ENCODE measurements at regions of chr13 and their contacts with region 1.

Region 1: DNA sequence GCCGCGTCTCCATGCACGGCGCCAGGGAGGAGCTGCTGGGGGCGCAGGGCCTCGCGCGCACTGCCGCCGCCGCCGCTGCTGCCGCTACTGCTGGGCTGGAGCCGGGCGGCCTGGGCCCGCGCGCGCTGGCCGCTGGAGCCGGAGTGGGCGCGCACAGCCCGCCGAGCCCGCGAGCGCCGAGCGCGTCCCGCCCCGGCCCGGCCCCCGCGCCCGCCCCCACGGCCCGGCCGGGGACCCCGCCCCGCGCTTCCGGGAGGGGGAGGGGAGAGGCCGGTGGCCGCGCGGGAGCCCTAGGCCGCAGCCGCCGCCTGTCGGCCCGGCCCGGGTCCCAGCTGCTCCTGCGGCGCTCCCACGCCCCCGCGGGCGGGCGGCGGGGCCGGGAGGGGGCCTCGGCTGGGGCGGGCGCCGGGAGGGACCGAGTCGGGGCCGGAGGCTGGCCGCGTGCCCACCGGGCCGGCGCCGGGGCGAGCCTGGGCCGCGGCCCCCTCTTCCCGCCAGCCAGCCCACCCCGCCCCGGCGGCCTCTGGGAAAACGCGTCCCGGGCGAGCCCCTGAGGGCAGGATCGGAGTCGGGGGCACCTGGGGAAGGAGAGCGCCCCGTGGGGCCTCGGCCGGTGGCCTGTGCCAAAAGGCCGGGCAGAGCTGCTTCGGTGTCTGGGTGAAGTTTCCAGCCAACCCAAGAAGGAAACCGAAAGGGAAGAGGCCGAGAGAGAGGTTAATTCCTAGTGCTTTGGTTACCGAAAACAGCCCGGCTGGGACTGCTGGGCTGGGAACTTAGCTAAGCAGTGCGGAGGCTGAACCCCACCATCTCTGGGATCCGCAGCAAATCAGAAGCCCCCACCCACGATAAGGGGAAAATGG is at the start of gene STK24:
- DNase-seq: peak; percentile 75
- ATAC-seq: peak; percentile 42
- H3K4me3 Mint-ChIP-seq: peak within 1 kb of the TSS; percentile 95
- H3K27ac Mint-ChIP-seq: peak within 1 kb of the TSS; percentile 76
- H3K4me1 Mint-ChIP-seq: peaks cover 39% of the 10 kb centered on the region
- H3K27me3 Mint-ChIP-seq: no peaks in the 10 kb centered on the region
- total RNA-seq, gene STK24: 146 to 173 TPM

Region 2: DNA sequence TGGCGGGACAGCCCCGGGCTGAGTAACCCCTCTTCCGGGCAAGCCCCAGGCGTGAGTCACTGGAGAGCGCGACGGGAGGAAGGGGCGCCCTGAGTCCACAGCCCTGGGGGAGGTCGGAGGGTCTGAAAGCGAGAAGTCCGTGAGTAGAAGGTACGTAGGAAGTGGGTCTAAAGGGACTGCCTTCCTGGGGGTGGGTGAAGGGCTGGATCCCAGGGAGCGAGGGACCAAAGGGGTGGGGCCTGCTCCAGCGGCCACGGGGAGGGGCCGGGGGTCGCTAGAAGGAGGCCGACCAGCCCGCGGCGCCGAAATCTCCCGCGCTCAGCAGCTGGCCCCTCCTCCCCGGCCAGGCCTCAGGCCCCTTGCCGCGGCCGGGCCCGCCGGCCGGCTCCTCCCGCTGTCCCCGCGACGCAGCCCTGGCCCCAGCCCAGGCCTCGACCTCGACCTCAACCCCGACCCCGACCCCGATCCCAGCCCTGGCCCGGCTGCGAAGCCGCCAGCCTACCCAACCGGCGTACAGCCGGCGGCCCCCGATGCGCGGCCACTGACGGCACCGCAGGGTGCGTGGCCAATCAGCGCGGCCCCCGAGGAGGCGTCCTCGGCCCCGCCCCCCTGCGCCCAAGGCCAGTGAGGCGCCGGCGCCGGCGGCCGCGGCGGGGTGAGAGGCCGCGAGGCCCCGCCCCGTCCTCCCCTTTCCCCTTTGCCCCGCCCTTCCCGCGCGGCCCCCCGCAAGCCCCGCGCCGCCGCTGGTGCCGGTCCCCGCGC is 601.2 kb before region 1 on chr13:
- CTCF ChIA-PET with region 1: no interaction called
- POLR2A ChIA-PET with region 1: no interaction called
- intact Hi-C with region 1: loop called in 1 of 2 experiments (anchors 1 kb)
- DNase-seq: peak; percentile 94
- ATAC-seq: peak; percentile 92
- H3K4me3 Mint-ChIP-seq: peak overlapping the region; percentile 99
- H3K27ac Mint-ChIP-seq: peak overlapping the region; percentile 96
- H3K4me1 Mint-ChIP-seq: peaks cover 31% of the 10 kb centered on the region
- H3K27me3 Mint-ChIP-seq: no peaks in the 10 kb centered on the region

Region 3: DNA sequence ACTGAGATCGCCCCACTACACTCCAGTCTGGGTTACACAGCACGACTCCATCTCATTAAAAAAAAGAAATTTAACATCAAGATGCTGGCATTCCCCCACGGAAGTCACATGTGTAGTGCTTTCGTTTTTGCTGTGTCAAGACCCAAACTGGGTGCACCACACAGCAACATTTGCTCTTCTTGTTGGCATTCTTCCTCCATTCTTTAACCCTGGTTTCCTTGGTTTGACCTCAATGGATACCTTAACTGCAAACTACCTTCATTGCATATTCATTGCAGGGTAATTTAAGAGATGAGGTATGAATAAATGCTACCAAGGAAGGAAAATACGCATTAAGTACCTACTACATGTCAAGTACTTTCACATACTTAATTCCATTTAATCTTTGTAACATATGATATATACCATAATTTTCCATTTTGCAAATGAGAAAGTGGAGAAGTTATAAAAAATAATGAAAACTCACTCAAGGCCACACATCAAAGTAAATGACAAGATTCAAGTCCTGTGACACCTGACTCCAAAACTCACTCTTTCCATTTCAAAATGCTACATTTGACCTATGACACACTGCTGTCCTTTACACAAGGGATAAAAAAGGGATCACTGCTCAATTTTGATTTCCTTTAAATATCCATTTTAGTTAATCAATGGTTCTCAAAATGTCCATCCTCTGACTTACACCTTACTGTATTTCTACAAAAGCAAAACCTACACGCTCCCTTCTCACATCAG is 59.5 kb before region 1 on chr13:
- CTCF ChIA-PET with region 1: interaction called, 3 read pairs
- POLR2A ChIA-PET with region 1: interaction called, 4 read pairs
- intact Hi-C with region 1: loop called (anchors 1 to 2 kb)
- DNase-seq: peak; percentile 69
- ATAC-seq: peak; percentile 54
- H3K4me3 Mint-ChIP-seq: peak overlapping the region; percentile 43
- H3K27ac Mint-ChIP-seq: peak overlapping the region; percentile 93
- H3K4me1 Mint-ChIP-seq: peaks cover 98% of the 10 kb centered on the region
- H3K27me3 Mint-ChIP-seq: no peaks in the 10 kb centered on the region

Region 4: DNA sequence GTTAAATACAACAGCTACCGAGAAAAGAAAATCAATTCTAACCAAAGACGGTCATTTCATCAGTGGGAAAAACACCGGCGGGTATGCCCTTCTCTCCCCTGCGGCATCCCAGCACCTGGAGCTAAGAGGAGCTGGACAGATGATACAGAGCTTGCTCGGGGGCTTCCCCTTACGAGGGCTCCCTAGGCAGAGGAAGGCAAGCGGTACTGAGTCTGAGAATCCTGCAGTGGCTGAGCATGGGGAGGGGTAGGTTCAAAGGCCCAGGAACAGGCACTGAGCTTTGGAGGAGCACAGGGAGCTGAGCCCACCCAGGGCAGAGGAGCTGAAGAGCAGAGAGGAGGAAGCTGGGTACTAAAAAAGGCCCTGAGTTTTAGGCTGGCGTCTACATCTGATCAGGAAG is 13.0 kb before region 1 on chr13:
- CTCF ChIA-PET with region 1: interaction called, 3 read pairs
- POLR2A ChIA-PET with region 1: no interaction called
- intact Hi-C with region 1: loop called in 1 of 2 experiments (anchors 1 kb)
- DNase-seq: peak; percentile 47
- ATAC-seq: peak; percentile 53
- H3K4me3 Mint-ChIP-seq: peak overlapping the region; percentile 72
- H3K27ac Mint-ChIP-seq: peak overlapping the region; percentile 88
- H3K4me1 Mint-ChIP-seq: peaks cover 93% of the 10 kb centered on the region
- H3K27me3 Mint-ChIP-seq: no peaks in the 10 kb centered on the region

Region 5: DNA sequence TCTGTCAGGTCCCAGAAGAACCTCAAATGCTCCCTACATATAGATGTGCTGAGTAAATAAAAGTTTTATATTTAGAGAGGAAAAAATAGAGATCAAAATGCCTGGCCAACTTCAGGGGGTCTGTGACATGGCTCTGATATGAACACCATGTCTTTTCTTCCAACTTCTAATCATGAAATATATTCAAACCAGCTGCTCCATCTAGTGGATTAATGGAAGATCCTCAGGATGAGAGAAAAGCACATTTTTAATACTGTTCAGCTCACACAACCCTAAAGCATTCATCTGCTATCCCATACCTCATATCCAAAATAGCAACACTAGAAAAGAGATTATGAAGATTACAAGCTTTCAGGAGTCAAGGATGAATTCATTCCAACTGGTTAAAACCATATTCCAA is 456.6 kb after region 1 on chr13:
- CTCF ChIA-PET with region 1: no interaction called
- POLR2A ChIA-PET with region 1: no interaction called
- intact Hi-C with region 1: loop called in 1 of 2 experiments (anchors 10 kb)
- DNase-seq: no peak
- ATAC-seq: peak; percentile 56
- H3K4me3 Mint-ChIP-seq: no peak overlapping the region
- H3K27ac Mint-ChIP-seq: no peak overlapping the region
- H3K4me1 Mint-ChIP-seq: peaks cover 51% of the 10 kb centered on the region
- H3K27me3 Mint-ChIP-seq: no peaks in the 10 kb centered on the region

Region 6: DNA sequence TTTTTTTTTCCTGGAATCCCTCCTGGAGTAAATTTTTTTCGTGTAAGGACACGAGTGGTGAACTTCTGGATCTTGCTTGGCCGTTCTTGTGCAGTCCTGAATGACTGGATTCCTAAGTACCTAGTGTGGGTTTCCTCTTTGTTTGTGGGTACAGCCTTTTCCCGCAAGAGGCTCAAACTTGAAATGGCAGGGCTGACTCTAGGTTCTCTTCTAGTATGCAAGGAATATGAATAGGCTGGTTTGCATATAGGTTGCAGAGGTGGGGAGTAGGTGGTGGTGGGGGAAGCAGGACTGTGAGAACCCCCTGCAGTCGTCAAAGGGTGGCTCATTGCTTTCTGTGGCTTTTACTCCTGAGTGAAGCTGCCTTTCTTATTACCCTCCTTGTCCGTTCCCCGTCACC is 637.0 kb after region 1 on chr13:
- CTCF ChIA-PET with region 1: no interaction called
- POLR2A ChIA-PET with region 1: no interaction called
- intact Hi-C with region 1: loop called in 1 of 2 experiments (anchors 2 kb)
- DNase-seq: peak; percentile 82
- ATAC-seq: peak; percentile 80
- H3K4me3 Mint-ChIP-seq: peak overlapping the region; percentile 74
- H3K27ac Mint-ChIP-seq: peak overlapping the region; percentile 87
- H3K4me1 Mint-ChIP-seq: peaks cover 79% of the 10 kb centered on the region
- H3K27me3 Mint-ChIP-seq: no peaks in the 10 kb centered on the region